Lower leg skin (tissue), 4 donors: ENCODE measurements at regions of chr11 and their contacts with region 1.

Region 1: GRCh38 chr11:31810779-31811647 is at the start of gene PAX6:
- DNase-seq: peak; percentile 65 to 87
- H3K4me3 ChIP-seq: peak within 1 kb of the TSS; percentile 2
- CTCF ChIP-seq: no peak
- POLR2A ChIP-seq: no peak
- total RNA-seq, gene PAX6: 0.13 to 2.7 (median 0.67) TPM in 3 of 4 donors, not detected in the other

Region 2: GRCh38 chr11:32323814-32324130 is 512.8 kb after region 1 on chr11:
- intact Hi-C with region 1: loop called (anchors 5 kb)
- DNase-seq: no peak
- H3K4me3 ChIP-seq: no peak overlapping the region
- CTCF ChIP-seq: no peak
- POLR2A ChIP-seq: no peak